ENCODE measurements at regions of chr19 and their contacts with region 1.

Region 1: DNA sequence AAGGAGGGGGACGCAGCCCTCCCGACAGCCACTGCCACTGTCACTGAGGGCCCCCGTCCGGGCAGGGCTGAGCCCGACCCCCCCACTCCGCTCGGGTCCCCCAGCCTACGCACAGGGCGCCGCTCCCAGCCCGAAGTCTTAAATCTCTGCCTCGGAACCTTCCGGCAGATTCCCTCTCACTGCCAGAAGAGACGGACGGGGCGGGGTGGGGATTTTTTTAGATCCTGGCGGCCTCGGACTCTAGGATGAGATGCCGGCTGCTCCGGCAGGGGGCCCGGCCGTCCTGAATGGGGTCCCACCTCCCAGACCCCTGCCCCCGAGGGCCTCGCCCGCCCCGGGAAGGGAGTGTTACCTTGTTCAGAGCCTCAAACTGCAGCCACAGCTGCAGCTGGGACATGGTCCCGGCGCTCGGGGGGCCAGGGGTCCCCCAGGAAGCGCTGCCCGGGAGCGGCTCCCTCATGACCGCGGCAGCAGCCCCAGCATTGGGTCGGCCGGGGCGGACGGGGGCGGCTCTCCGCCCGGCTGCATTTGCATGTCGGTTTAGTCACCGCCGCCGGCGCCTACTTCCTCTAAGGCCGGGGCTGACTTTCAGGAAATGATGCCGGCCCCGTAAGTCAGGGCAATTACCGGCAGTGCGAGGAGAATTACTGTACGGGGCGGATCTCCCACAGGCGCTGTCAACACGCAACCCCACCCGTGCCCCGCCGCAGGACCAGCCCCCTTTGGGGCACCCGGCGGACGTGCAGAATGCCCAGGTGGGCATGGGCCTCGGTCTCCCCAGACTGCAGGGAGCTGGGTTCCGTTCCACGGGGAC is 28.2 kb downstream of the GPX4 start:
- DNase-seq: peak; percentile 96
- ATAC-seq: peak; percentile 70
- H3K4me3 Mint-ChIP-seq: peak overlapping the region; percentile 85
- H3K27ac Mint-ChIP-seq: peak overlapping the region; percentile 94
- H3K4me1 Mint-ChIP-seq: peaks cover 42% of the 10 kb centered on the region
- H3K27me3 Mint-ChIP-seq: no peaks in the 10 kb centered on the region
- CTCF ChIP-seq: no peak

Region 2: DNA sequence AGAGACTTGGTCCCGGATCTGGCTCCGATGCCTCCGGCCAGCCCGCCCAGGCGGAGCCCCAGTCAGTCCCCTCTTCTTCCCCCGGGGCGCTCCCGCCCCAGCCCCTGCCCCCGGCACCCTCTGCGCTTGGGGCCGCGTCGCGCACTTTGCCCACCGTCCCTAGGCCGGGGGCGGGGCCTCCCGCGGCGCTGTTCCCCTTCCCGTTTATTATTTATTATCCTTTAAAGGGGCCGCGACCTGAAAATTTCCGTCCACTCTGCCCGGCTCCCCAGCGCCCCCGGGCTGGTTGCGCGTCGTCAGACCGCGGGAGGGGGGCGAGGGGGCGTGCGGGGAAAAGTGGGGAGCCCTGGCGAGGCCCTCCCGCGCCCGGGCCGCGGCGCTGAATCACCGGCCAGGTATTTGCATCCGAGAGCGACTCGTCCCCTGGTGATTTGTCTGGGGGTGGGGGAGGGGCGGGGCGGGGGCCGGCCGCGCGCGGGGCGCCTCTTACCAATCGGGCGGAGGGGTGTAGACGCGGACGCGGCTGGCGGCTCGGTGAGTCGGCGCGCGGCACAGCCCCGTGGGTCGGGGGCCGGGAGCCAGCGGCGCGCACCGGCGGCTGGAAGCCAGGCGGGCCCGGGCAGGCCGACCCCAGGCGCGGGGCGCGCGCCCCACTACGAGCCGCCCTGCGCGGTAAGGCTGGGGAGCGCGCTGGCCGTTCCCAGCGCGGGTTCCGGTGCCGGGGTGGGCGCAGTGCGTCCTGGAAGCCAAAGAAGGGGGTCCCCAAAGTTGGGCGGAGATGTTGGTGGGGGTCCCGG is 206.2 kb before region 1 on chr19 and contains the start of gene ARID3A:
- CTCF ChIA-PET with region 1: no interaction called
- POLR2A ChIA-PET with region 1: no interaction called
- intact Hi-C with region 1: no loop called
- DNase-seq: peak; percentile 84
- ATAC-seq: peak; percentile 67
- H3K4me3 Mint-ChIP-seq: peak within 1 kb of the TSS; percentile 73
- H3K27ac Mint-ChIP-seq: peak within 1 kb of the TSS; percentile 76
- H3K4me1 Mint-ChIP-seq: peaks cover 19% of the 10 kb centered on the region
- H3K27me3 Mint-ChIP-seq: no peaks in the 10 kb centered on the region
- CTCF ChIP-seq: no peak
- total RNA-seq, gene ARID3A: 18.7 to 22.1 TPM

Region 3: GRCh38 chr19:1113033-1113985 is 18.6 kb before region 1 on chr19:
- CTCF ChIA-PET with region 1: interaction called, 27 read pairs
- POLR2A ChIA-PET with region 1: interaction called, 29 read pairs
- intact Hi-C with region 1: no loop called
- DNase-seq: peak; percentile 95
- ATAC-seq: peak; percentile 96
- H3K4me3 Mint-ChIP-seq: no peak overlapping the region
- H3K27ac Mint-ChIP-seq: no peak overlapping the region
- H3K4me1 Mint-ChIP-seq: peaks cover 5% of the 10 kb centered on the region
- H3K27me3 Mint-ChIP-seq: no peaks in the 10 kb centered on the region
- CTCF ChIP-seq: peak; percentile 95

Region 4: GRCh38 chr19:1183534-1184172 is 51.7 kb after region 1 on chr19:
- CTCF ChIA-PET with region 1: interaction called, 3 read pairs
- POLR2A ChIA-PET with region 1: no interaction called
- intact Hi-C with region 1: loop called (anchors 10 kb)
- DNase-seq: no peak
- ATAC-seq: no peak
- H3K4me3 Mint-ChIP-seq: no peak overlapping the region
- H3K27ac Mint-ChIP-seq: no peak overlapping the region
- H3K4me1 Mint-ChIP-seq: peaks cover 6% of the 10 kb centered on the region
- H3K27me3 Mint-ChIP-seq: no peaks in the 10 kb centered on the region
- CTCF ChIP-seq: no peak

Region 5: GRCh38 chr19:1189419-1189818 is 57.5 kb after region 1 on chr19:
- CTCF ChIA-PET with region 1: interaction called, 6 read pairs
- POLR2A ChIA-PET with region 1: interaction called, 10 read pairs
- intact Hi-C with region 1: loop called (anchors 10 kb)
- DNase-seq: peak; percentile 76
- ATAC-seq: peak; percentile 85
- H3K4me3 Mint-ChIP-seq: no peak overlapping the region
- H3K27ac Mint-ChIP-seq: peak overlapping the region; percentile 80
- H3K4me1 Mint-ChIP-seq: peaks cover 27% of the 10 kb centered on the region
- H3K27me3 Mint-ChIP-seq: no peaks in the 10 kb centered on the region
- CTCF ChIP-seq: no peak